ENCODE measurements at regions of chr2 and their contacts with region 1.

Region 1: GRCh38 chr2:104901037-104901851 is 47.3 kb downstream of the POU3F3 start:
- DNase-seq: no peak
- ATAC-seq: no peak
- H3K4me3 ChIP-seq: no peak overlapping the region
- H3K27ac ChIP-seq: no peak overlapping the region
- H3K4me1 ChIP-seq: peaks cover 0 to 8% of the 10 kb centered on the region in 2 experiments; a peak in 1 of 4 replicates
- H3K27me3 ChIP-seq: peaks cover 39% of the 10 kb centered on the region
- CTCF ChIP-seq: no peak
- POLR2A ChIP-seq: no peak
- RAD21 ChIP-seq: no peak

Region 2: DNA sequence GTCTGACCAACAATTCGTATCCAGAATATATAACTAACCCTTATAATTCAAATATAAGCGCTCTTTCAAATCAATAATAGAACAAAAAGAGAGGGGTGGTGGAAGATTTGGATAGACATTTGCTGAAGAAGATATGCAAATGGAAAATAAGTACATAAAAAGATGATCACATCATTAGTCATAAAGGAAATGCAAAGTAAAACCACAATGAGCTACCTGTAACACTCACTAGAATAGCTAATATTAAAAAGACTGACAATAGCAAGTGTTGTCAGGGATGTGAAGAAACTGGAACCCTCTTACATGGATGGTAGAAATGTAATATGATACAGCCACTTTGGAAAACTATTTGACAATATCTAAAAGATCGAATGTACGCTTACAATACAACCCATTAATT is 51.7 kb after region 1 on chr2:
- CTCF ChIA-PET with region 1: no interaction called
- POLR2A ChIA-PET with region 1: no interaction called
- RAD21 ChIA-PET with region 1: no interaction called
- intact Hi-C with region 1: loop called (anchors 2 kb)
- DNase-seq: no peak
- ATAC-seq: no peak
- H3K4me3 ChIP-seq: no peak overlapping the region
- H3K27ac ChIP-seq: no peak overlapping the region
- H3K4me1 ChIP-seq: no peaks in the 10 kb centered on the region
- H3K27me3 ChIP-seq: peaks cover 10% of the 10 kb centered on the region
- CTCF ChIP-seq: no peak
- POLR2A ChIP-seq: no peak
- RAD21 ChIP-seq: no peak

Measured in HCT116 (cell line).